Activated T-helper 1 cell treated with anti-CD3 and anti-CD28 coated beads, Interleukin-12 subunit alpha, Interleukin-12 subunit beta, Interleukin-2, Interleukin-4 antibody, amounts not matched to agents 30 ng/mL and 10 ng/mL and 1 ng/mL, durations not matched to agents 14 hours and 24 hours and 36 hours (primary cell): ENCODE measurements at regions of chr10 and their contacts with region 1.

Region 1: DNA sequence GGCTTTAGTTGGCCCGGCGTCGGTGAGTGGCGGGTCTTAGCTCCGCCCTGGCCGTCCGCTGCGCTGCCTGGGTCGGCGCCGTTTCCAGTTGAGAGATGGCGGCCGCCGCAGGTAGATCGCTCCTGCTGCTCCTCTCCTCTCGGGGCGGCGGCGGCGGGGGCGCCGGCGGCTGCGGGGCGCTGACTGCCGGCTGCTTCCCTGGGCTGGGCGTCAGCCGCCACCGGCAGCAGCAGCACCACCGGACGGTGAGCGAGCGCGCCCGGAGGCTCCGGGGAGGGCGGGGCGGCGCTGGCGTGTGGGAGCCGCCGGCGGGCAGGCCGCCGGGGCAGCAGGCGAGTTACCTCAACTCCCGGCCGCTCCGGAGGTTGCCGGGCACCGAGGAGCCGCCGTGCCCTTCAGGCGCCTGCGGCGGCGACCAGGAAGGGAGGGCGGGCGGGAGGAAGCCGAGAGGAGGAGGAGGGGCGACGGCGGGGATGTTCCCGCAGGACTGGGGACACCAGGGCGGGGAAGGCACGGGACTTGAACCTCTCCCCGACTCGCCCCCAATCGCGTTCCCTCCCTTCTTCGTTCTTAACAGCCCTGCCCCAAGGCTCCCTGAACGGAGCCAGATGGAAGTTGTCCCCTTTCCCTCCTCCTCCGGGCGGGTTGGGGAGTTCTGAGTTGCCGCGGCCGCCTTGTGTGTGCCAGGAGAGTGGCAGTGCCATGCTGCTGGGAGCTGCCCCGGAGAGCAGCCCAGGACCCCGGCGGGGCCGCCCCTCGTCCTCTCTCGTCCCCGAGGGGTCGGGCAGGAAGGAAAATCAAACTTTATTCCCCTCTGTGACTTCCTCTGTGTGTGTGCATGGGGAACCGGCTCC is at the start of gene MCU:
- DNase-seq: peak; percentile 90
- H3K4me3 Mint-ChIP-seq: peak within 1 kb of the TSS; percentile 85
- H3K27ac Mint-ChIP-seq: peak within 1 kb of the TSS; percentile 66
- H3K4me1 Mint-ChIP-seq: peaks cover 37% of the 10 kb centered on the region
- H3K27me3 Mint-ChIP-seq: peaks cover 7% of the 10 kb centered on the region
- total RNA-seq, gene MCU: 12.6 and 17.5 TPM in 2 replicates

Region 2: DNA sequence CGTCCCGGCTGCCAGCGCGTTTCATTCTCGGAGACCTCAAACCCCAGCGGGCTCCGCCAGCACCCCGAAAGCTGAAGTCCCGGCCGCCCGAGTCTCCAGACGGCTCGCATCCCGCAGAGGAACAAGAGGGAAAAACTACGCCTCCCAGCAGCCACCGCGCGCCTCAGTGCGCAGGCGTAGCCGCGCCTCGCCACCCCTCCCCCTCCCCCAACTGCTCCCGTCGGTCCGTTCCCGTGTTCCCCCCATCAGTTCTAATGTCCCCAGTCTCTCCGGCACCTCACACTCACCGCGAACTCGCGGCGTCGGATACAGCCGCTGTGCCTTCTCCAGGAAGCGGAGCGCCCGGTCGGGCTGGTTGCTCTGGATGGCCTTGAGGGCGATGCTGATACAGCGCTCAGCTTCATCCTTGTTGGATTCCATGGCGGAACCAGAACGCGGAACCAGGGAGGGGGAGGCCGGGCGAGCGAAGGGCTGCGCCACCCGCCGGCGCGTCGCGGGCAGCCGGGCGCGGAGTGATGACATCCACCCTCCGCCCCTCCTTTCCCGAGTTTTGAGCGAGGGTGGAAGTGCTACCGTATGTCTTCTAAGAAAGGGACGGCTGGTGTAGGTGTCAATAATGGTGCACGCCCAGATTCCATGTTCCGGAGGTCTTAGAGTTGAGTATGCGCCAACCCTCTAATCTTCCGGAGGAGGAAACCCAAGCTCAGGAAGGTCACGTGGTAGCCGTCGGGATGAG is 337.6 kb before region 1 on chr10 and contains the start of gene DNAJB12:
- intact Hi-C with region 1: loop called (anchors 1 kb)
- DNase-seq: peak; percentile 86
- H3K4me3 Mint-ChIP-seq: peak within 1 kb of the TSS; percentile 97
- H3K27ac Mint-ChIP-seq: peak within 1 kb of the TSS; percentile 96
- H3K4me1 Mint-ChIP-seq: peaks cover 31% of the 10 kb centered on the region
- H3K27me3 Mint-ChIP-seq: peaks cover 2% of the 10 kb centered on the region
- total RNA-seq, gene DNAJB12: 32.4 and 38.0 TPM in 2 replicates

Region 3: GRCh38 chr10:72567884-72568640 is 124.2 kb before region 1 on chr10:
- intact Hi-C with region 1: loop called (anchors 1 kb)
- DNase-seq: no peak
- H3K4me3 Mint-ChIP-seq: no peak overlapping the region
- H3K27ac Mint-ChIP-seq: no peak overlapping the region
- H3K4me1 Mint-ChIP-seq: peaks cover 28% of the 10 kb centered on the region
- H3K27me3 Mint-ChIP-seq: no peaks in the 10 kb centered on the region

Region 4: GRCh38 chr10:72702868-72703581 is 10.7 kb after region 1 on chr10:
- intact Hi-C with region 1: no loop called
- DNase-seq: no peak
- H3K4me3 Mint-ChIP-seq: no peak overlapping the region
- H3K27ac Mint-ChIP-seq: no peak overlapping the region
- H3K4me1 Mint-ChIP-seq: peaks cover 20% of the 10 kb centered on the region
- H3K27me3 Mint-ChIP-seq: peaks cover under 1% of the 10 kb centered on the region

Region 5: GRCh38 chr10:72834183-72834825 is 142.0 kb after region 1 on chr10:
- intact Hi-C with region 1: loop called (anchors 2 kb)
- DNase-seq: peak; percentile 14
- H3K4me3 Mint-ChIP-seq: no peak overlapping the region
- H3K27ac Mint-ChIP-seq: no peak overlapping the region
- H3K4me1 Mint-ChIP-seq: no peaks in the 10 kb centered on the region
- H3K27me3 Mint-ChIP-seq: no peaks in the 10 kb centered on the region

Region 6: DNA sequence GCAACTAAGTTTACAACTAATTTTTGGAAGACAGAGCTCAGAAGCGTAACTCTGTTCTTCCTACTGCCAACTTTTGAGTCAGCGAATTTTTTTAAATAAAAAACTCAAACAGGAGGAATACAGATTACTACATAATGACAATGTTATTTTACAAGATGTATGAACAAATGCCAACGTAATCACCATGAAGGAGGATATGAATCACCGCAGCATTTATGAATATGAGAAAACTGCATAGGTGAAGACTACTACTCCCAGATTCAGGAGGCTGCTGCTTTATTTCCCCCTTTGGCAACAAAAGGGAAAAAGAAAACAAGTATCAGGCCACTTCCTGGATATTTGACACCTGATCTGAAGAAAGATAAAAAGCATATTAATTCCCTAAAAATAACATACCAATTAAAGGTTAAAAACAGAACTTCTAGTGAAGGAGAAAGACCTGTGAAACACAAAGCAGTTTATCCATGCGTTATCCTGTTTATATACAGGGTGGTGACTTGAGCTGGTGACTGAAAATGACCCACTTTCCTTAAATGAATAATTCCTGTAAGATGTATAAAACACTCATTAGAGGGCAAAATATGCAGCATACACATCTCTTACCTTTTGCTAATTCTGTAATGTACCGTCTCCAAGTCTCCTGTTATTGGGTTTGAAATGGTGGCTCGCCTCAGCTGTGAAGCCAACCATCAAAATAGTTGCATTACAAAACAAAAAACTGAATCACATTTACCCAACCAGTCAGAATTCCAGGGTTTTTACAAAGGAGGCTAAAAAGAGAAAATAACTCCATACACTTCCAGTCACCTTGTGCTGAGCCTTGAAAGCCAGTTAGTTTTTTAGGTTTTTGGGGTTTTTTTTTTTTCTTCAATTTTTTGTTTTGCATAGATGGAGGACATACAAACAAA is 352.3 kb after region 1 on chr10:
- intact Hi-C with region 1: no loop called
- DNase-seq: no peak
- H3K4me3 Mint-ChIP-seq: no peak overlapping the region
- H3K27ac Mint-ChIP-seq: no peak overlapping the region
- H3K4me1 Mint-ChIP-seq: peaks cover 12% of the 10 kb centered on the region
- H3K27me3 Mint-ChIP-seq: no peaks in the 10 kb centered on the region

Region 7: DNA sequence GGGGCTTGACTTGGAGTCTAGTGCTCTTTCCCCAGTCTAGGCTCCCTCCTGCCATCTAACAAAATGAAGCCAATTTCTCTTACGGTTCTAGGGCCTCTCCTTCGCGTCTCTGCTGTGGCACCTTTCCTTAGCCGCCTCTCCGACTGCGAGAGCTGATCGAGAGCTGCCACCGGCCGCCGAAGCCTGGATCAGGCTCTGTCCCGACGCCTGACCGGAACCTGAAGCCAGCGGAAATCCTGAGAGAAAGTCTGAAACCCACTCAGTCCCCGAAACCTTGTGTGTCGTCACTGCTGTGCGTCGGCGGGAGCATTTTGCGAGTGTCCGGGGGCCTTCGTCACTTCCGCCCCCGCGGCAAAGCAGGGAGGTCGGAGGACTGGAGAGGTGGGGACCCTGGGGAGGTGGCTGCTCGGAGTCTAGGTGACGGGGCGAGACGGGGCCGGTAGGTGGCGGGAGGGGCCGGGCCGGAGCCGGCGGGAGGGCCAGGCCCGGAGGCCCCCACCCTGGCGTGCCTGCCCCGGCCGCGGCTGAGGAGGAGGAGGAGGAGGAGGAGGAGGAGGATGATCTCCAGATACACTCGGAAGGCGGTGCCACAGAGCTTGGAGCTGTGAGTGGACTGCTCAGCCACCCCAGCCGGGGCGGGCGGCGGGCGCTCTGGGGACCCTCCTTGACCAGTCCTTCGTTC is 475.6 kb after region 1 on chr10 and contains the starts of genes ECD and FAM149B1:
- intact Hi-C with region 1: loop called (anchors 5 kb)
- DNase-seq: peak; percentile 91
- H3K4me3 Mint-ChIP-seq: peak within 1 kb of the TSS; percentile 99
- H3K27ac Mint-ChIP-seq: peak within 1 kb of the TSS; percentile 99
- H3K4me1 Mint-ChIP-seq: peaks cover 42% of the 10 kb centered on the region
- H3K27me3 Mint-ChIP-seq: no peaks in the 10 kb centered on the region
- total RNA-seq, gene ECD: 38.0 and 39.5 TPM in 2 replicates
- total RNA-seq, gene FAM149B1: 11.1 and 11.3 TPM in 2 replicates